ENCODE measurements at regions of chr1 and their contacts with region 1.

Region 1: DNA sequence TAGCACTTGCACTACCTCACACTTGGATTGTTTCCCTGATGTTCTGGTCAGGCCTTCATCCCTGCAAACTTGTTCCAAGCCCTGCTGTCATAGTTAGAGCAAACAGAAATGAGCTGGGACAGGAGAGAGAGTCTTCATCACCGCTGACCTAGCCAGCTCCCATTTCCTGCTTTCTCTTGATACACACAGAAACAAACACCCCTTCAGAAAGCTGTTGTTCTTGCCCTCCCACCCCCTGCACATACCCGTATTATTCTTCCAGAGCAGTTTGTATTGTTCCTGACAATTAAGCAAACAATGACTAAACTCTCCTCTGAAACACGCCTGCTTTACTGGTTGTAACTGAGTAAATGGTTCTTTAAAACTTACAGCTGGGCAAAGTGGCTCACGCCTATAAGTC is 2.9 kb upstream of the SYT2 start:
- H3K4me3 ChIP-seq: no peak overlapping the region
- H3K27ac ChIP-seq: no peak overlapping the region
- H3K4me1 ChIP-seq: no peaks in the 10 kb centered on the region; the same call in 1 of the 2 replicates
- CTCF ChIP-seq: no peak

Region 2: GRCh38 chr1:202501281-202501680 is 211.8 kb before region 1 on chr1:
- CTCF ChIA-PET with region 1: interaction called, 18 read pairs
- POLR2A ChIA-PET with region 1: no interaction called
- H3K4me3 ChIP-seq: no peak overlapping the region
- H3K27ac ChIP-seq: no peak overlapping the region
- H3K4me1 ChIP-seq: peaks cover 4% of the 10 kb centered on the region
- CTCF ChIP-seq: peak; percentile 50; the same call in 1 of the 2 replicates

Region 3: GRCh38 chr1:202659964-202660363 is 53.1 kb before region 1 on chr1:
- CTCF ChIA-PET with region 1: interaction called, 10 read pairs
- POLR2A ChIA-PET with region 1: no interaction called
- H3K4me3 ChIP-seq: no peak overlapping the region
- H3K27ac ChIP-seq: no peak overlapping the region
- H3K4me1 ChIP-seq: no peaks in the 10 kb centered on the region
- CTCF ChIP-seq: no peak; the same call in 1 of the 2 replicates

Region 4: GRCh38 chr1:202745323-202745888 is 32.3 kb after region 1 on chr1:
- CTCF ChIA-PET with region 1: no interaction called
- POLR2A ChIA-PET with region 1: no interaction called
- H3K4me3 ChIP-seq: no peak overlapping the region
- H3K27ac ChIP-seq: no peak overlapping the region
- H3K4me1 ChIP-seq: no peaks in the 10 kb centered on the region
- CTCF ChIP-seq: no peak

Region 5: GRCh38 chr1:202796302-202797069 is 83.4 kb after region 1 on chr1:
- CTCF ChIA-PET with region 1: no interaction called
- POLR2A ChIA-PET with region 1: no interaction called
- H3K4me3 ChIP-seq: no peak overlapping the region
- H3K27ac ChIP-seq: no peak overlapping the region
- H3K4me1 ChIP-seq: peaks cover 5% of the 10 kb centered on the region
- CTCF ChIP-seq: no peak

Region 6: GRCh38 chr1:203148125-203148524 is 435.0 kb after region 1 on chr1:
- CTCF ChIA-PET with region 1: no interaction called
- POLR2A ChIA-PET with region 1: no interaction called
- H3K4me3 ChIP-seq: no peak overlapping the region
- H3K27ac ChIP-seq: no peak overlapping the region
- H3K4me1 ChIP-seq: no peaks in the 10 kb centered on the region; the same call in 1 of the 2 replicates
- CTCF ChIP-seq: no peak